ENCODE measurements at regions of chr16 and their contacts with region 1.

Region 1: GRCh38 chr16:67428146-67428731 is 2.7 kb upstream of the HSD11B2 start:
- DNase-seq: peak; percentile 69
- H3K4me3 Mint-ChIP-seq: no peak overlapping the region
- H3K27ac Mint-ChIP-seq: no peak overlapping the region
- H3K4me1 Mint-ChIP-seq: peaks cover 10% of the 10 kb centered on the region
- H3K27me3 Mint-ChIP-seq: peaks cover 31% of the 10 kb centered on the region

Region 2: DNA sequence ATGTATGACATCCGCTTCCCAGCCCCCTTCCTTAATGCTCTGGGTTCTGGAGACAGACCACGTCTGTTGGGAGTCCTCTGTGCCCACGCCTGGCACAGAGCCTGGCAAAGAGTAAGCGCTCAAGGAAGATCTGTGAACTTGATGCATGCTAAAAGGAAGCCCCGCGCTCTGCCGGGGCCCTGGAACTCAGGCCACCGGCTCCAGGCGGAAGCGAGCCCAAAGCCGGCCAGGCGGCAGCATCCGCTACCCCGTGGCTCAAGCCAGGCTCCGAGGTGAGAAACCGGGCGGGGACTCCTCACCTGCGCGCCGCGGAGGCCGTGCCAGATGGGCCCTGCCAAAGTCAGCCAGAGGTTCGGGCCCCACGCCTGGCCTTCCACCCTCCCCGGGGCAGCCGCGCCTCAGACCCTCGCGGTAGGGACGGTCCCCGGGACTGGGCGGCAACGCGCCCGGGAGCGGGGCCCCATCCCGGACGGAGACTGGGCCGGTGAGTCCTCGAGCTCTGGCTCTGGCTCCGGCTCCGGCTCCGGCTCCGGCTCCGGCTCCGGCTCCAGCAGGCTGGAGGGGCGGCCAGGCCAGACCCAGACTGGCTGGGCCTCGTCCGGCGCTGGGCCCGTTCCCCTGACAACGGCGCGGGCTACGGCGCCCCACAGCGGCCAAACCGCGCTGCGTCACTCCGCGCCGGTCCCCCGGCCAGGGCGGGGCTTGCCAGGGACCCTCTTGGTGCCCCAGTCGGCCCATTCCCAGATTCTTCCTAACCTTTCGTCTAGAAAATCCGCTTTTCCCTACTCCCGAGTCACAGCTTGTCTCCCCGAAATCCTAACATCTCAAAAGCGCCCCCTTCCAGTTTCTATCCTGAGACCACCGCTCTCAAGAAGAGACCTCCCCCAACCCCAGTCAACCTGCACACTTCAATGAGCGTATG is 12.1 kb before region 1 on chr16 and contains the start of gene ZDHHC1:
- CTCF ChIA-PET with region 1: interaction called, 11 read pairs
- intact Hi-C with region 1: no loop called
- DNase-seq: peak; percentile 48
- H3K4me3 Mint-ChIP-seq: peak within 1 kb of the TSS; percentile 66
- H3K27ac Mint-ChIP-seq: no peak within 1 kb of the TSS
- H3K4me1 Mint-ChIP-seq: peaks cover 6% of the 10 kb centered on the region
- H3K27me3 Mint-ChIP-seq: peaks cover 34% of the 10 kb centered on the region
- total RNA-seq, gene ZDHHC1: 0.12 to 0.32 TPM

Region 3: GRCh38 chr16:67447508-67448076 is 19.4 kb after region 1 on chr16:
- CTCF ChIA-PET with region 1: interaction called, 60 read pairs
- intact Hi-C with region 1: loop called (anchors 1 kb)
- DNase-seq: peak; percentile 90
- H3K4me3 Mint-ChIP-seq: no peak overlapping the region
- H3K27ac Mint-ChIP-seq: no peak overlapping the region
- H3K4me1 Mint-ChIP-seq: no peaks in the 10 kb centered on the region
- H3K27me3 Mint-ChIP-seq: no peaks in the 10 kb centered on the region

Region 4: DNA sequence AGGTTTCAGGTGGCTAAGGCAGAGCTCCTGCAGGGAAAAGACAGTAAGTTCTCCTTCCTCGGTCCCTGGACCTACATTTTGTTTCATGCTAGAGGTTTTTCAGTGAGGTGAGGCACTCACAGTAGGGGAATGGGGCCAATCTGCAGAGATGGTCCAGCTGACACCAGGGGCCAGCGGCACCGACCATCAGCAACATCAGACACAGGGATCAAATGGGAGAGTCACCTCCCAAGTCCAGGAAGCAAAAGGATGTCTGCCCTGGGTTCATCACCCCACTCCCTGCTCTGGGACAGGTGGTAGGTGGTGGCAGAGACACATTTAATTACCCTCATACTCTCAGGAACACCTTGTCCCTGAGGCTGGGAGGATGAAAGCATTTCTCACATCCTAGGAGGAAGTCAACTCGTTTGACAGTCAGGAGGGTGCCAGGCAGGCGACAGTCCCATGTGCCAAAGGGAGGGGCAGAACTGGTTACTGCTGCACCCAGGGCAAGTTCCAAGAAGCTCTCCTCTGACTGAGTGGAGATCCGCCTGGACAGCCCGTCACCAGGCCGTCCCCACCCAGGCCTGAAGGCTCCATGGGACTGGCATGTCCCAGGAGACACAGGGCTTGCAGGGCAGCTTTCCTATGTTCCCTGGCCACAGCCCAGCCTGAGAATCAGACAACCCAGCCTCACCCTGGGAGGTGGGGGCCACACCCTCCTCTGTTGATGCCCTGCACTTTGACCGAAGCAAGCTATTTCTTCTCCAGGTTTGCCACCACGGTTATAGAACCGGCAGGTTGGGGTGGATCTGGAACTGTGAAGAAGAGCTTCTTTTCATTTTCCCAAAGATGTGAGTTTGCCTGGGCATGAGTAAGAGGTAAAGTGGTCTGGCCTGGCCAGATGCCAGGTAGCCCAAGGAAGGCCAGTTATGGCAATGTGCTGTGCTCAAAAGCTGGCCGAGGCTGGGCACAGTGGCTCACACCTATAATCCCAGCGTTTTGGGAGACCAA is 33.7 kb after region 1 on chr16:
- CTCF ChIA-PET with region 1: interaction called, 55 read pairs
- intact Hi-C with region 1: loop called (anchors 1 kb)
- DNase-seq: no peak
- H3K4me3 Mint-ChIP-seq: no peak overlapping the region
- H3K27ac Mint-ChIP-seq: no peak overlapping the region
- H3K4me1 Mint-ChIP-seq: peaks cover 14% of the 10 kb centered on the region
- H3K27me3 Mint-ChIP-seq: no peaks in the 10 kb centered on the region

Region 5: GRCh38 chr16:67468731-67469130 is 40.5 kb after region 1 on chr16:
- CTCF ChIA-PET with region 1: interaction called, 55 read pairs
- intact Hi-C with region 1: loop called (anchors 1 kb)
- DNase-seq: no peak
- H3K4me3 Mint-ChIP-seq: no peak overlapping the region
- H3K27ac Mint-ChIP-seq: no peak overlapping the region
- H3K4me1 Mint-ChIP-seq: peaks cover 25% of the 10 kb centered on the region
- H3K27me3 Mint-ChIP-seq: no peaks in the 10 kb centered on the region

Region 6: GRCh38 chr16:67514382-67514828 is 86.2 kb after region 1 on chr16:
- CTCF ChIA-PET with region 1: interaction called, 26 read pairs
- intact Hi-C with region 1: loop called (anchors 1 kb)
- DNase-seq: peak; percentile 95
- H3K4me3 Mint-ChIP-seq: no peak overlapping the region
- H3K27ac Mint-ChIP-seq: peak overlapping the region; percentile 77
- H3K4me1 Mint-ChIP-seq: peaks cover 6% of the 10 kb centered on the region
- H3K27me3 Mint-ChIP-seq: no peaks in the 10 kb centered on the region

Measured in activated naive CD4-positive, alpha-beta T cell treated with anti-CD3 and anti-CD28 coated beads for 36 hours (primary cell).